ENCODE measurements at regions of chr2 and their contacts with region 1.

Region 1: GRCh38 chr2:172931918-172932520 is 143.6 kb upstream of the MAP3K20 start:
- DNase-seq: peak; percentile 67
- ATAC-seq: no peak; the same call in 1 of the 2 replicates
- H3K4me3 Mint-ChIP-seq: no peak overlapping the region
- H3K27ac Mint-ChIP-seq: peak overlapping the region; percentile 67; the same call in 1 of the 2 replicates
- H3K4me1 Mint-ChIP-seq: peaks cover 27% of the 10 kb centered on the region
- H3K27me3 Mint-ChIP-seq: no peaks in the 10 kb centered on the region
- CTCF ChIP-seq: peak; percentile 49; the same call in 1 of the 2 replicates

Region 2: DNA sequence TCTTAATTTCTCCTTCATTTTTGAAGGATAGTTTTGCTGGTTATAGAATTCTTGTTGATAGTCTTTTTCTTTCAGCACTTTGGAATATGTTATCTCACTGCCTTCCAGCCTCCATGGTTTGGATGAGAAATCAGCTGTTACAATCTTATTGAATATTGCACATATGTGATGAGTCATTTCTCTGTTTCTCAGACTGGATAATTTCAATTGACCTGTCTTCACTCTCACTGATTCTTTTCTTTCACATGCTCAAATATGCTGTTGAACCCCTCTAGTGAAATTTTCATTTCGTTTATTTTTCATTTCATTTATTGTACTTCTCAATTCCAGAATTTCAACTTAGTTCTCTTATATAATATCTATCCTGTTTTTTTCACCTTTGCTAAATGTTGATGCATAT is 354.0 kb before region 1 on chr2:
- CTCF ChIA-PET with region 1: no interaction called
- POLR2A ChIA-PET with region 1: no interaction called
- DNase-seq: no peak
- ATAC-seq: no peak
- H3K4me3 Mint-ChIP-seq: no peak overlapping the region
- H3K27ac Mint-ChIP-seq: no peak overlapping the region
- H3K4me1 Mint-ChIP-seq: peaks cover 18% of the 10 kb centered on the region
- H3K27me3 Mint-ChIP-seq: no peaks in the 10 kb centered on the region
- CTCF ChIP-seq: no peak

Region 3: GRCh38 chr2:172813314-172813888 is 118.6 kb before region 1 on chr2:
- CTCF ChIA-PET with region 1: interaction called, 13 read pairs
- POLR2A ChIA-PET with region 1: no interaction called
- DNase-seq: no peak
- ATAC-seq: no peak
- H3K4me3 Mint-ChIP-seq: no peak overlapping the region
- H3K27ac Mint-ChIP-seq: no peak overlapping the region
- H3K4me1 Mint-ChIP-seq: no peaks in the 10 kb centered on the region; the same call in 1 of the 2 replicates
- H3K27me3 Mint-ChIP-seq: no peaks in the 10 kb centered on the region
- CTCF ChIP-seq: no peak

Region 4: DNA sequence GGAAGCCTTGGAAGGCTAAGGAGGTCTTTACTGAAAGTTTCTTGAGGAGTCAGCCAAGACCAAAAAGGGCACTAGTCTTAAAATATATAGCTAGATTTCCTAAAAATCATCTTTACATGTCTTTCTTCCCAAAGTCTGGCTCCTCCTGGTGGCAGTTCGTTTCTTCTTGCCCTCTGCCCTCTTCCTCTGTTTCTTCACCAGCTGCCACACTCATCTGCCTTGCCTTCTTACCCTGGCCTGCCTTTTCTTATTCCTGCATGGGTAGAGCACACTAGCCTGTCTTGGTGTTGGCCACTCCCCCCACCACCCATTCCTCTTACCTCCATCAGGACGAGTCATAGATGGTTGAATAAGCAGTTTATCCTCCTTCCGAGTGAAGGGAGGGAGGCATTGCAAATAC is 66.6 kb before region 1 on chr2:
- CTCF ChIA-PET with region 1: interaction called, 60 read pairs
- POLR2A ChIA-PET with region 1: no interaction called
- DNase-seq: no peak
- ATAC-seq: peak; percentile 81
- H3K4me3 Mint-ChIP-seq: no peak overlapping the region
- H3K27ac Mint-ChIP-seq: no peak overlapping the region
- H3K4me1 Mint-ChIP-seq: peaks cover 5% of the 10 kb centered on the region
- H3K27me3 Mint-ChIP-seq: no peaks in the 10 kb centered on the region
- CTCF ChIP-seq: no peak

Region 5: DNA sequence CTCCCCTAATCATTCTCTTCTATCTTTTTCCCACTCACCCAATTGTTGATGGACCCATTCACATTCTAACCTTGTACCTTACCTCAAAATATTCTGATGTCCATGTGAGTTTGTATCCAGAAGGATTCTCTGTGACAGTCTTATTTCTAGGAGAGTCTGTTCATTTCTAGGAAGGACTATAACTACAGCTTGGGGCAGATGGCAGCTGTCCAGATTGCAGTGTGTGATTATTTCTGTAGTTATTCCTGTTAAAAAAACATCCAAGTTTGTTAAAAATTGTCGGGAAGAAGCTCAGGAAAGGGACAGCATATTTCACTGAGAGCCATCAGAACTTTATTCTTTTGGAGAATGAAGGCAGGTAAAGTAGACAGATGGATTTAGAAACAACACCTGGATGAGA is 53.8 kb before region 1 on chr2:
- CTCF ChIA-PET with region 1: interaction called, 13 read pairs
- POLR2A ChIA-PET with region 1: no interaction called
- DNase-seq: no peak
- ATAC-seq: no peak
- H3K4me3 Mint-ChIP-seq: no peak overlapping the region
- H3K27ac Mint-ChIP-seq: no peak overlapping the region
- H3K4me1 Mint-ChIP-seq: no peaks in the 10 kb centered on the region
- H3K27me3 Mint-ChIP-seq: peaks cover 28% of the 10 kb centered on the region
- CTCF ChIP-seq: no peak

Region 6: DNA sequence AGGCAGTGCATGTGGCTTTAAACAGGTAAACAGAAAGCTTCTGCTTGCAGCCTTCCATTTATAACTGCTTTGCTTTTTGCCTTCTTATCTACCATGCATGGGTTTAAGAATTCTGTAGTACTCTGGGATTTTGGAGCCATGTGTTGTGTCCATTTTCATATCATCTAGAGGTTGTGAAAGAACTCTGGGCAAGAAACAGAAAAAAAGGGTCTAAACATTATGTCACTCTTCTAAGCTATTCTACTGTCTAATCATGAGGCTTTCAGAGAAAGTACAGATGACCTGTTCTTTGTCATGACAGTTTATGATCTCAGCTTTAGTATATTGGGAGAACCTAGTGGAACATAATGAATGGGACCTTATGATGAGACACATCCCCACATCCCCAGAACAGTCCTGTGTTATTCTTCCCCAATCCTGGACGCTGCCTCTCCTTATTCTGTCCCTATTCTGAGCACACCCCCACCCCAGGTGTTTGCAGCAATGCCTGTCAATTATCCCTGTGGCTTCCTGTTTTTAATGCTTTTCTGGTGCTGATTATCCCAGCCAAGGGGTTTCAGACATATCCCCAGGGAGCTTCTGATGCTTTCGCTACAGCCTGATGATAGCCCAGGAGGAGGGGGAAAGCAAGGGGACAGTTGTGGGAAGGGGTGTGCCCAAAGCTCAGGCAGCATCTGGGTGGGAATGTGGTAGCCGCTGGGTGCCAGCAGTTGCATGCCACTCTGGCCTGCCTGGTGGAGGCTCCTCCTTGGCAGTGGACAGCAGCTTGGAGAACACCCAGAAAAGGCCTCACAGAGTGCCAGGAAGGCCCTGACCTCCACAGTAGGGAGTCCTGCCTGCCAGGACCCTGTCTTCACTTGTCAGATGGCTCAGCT is 25.8 kb before region 1 on chr2:
- CTCF ChIA-PET with region 1: interaction called, 11 read pairs
- POLR2A ChIA-PET with region 1: no interaction called
- DNase-seq: no peak
- ATAC-seq: peak; percentile 59
- H3K4me3 Mint-ChIP-seq: no peak overlapping the region
- H3K27ac Mint-ChIP-seq: no peak overlapping the region
- H3K4me1 Mint-ChIP-seq: peaks cover 23% of the 10 kb centered on the region
- H3K27me3 Mint-ChIP-seq: no peaks in the 10 kb centered on the region
- CTCF ChIP-seq: no peak

Region 7: DNA sequence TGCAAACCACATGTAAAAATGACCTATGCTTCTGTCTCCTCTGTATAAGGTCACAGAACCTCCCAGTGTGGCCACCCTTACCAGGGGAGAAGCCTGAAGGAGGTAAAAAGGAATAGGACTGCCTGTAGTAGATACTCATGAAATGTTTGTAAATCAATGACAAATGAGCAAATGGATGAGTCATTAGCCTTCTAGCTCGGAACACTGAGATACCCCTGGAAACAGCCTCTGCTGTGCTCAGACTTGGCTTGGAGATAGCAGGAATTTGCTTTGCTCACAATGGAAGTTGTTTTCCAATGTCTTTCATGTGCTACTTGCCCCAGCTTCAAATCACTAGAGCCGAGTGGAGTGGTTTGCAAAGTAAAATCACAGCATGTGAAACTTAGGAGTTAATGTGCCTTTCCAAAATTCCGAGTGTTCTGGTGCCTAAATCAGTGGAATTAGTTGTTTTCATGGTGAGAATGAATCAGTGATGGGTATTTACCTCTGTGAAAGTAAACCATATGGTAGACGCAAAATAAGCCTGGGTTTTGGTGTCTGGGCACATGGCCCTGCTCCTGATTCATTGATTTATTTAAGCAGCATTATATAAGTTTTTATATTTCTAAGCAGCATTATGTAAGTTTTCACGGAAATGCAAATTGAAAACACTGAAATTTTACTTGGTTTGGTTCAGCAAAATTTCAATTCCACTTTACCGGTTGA is 10.3 kb before region 1 on chr2:
- CTCF ChIA-PET with region 1: interaction called, 13 read pairs
- POLR2A ChIA-PET with region 1: no interaction called
- DNase-seq: no peak
- ATAC-seq: no peak
- H3K4me3 Mint-ChIP-seq: no peak overlapping the region
- H3K27ac Mint-ChIP-seq: no peak overlapping the region
- H3K4me1 Mint-ChIP-seq: no peaks in the 10 kb centered on the region
- H3K27me3 Mint-ChIP-seq: no peaks in the 10 kb centered on the region
- CTCF ChIP-seq: no peak